Mammary epithelial cell (primary cell): ENCODE measurements at regions of chr22 and their contacts with region 1.

Region 1: DNA sequence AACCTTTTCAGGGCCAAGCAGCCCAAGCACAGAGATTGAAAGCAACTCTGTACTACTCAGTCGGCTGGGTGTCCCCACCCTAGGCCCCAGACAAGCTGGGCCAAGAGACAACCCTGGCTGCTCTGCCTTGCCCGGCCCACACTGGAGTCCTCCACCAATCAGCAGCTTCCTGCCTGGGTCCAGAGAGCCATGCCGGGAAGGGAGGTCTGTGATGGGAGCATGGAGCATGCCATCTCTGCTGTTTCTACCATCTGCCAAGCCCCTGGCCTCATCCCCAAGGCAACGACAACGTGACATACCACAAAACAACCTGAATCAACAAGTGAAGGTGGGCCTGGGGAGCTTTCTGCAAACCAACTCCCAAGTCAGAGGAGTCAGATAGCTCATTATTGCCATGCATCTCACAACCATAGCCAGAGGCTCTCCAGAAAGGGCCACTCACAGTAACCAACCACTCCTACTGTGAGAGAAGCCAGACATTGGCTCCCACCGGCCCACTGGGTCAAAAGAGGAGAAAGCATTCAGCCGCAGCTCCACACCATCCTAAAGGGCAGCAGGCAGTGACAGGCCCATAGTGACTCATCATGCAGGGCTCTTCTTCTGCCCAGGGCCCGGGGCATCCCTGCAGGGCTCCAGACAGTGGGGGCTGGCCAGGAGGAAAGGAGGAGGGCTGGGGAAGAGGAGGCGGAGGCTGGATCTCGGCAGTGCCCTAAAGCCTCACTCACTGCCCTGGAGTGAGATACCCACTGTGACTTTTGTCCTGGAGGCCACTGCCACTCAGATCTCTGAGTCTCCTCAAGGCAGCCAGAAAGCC is 18.1 kb downstream of the PATZ1 start:
- DNase-seq: peak; percentile 61
- H3K4me3 ChIP-seq: no peak overlapping the region
- H3K27ac ChIP-seq: no peak overlapping the region
- H3K4me1 ChIP-seq: peaks cover 30% of the 10 kb centered on the region
- H3K27me3 ChIP-seq: no peaks in the 10 kb centered on the region
- CTCF ChIP-seq: no peak

Region 2: DNA sequence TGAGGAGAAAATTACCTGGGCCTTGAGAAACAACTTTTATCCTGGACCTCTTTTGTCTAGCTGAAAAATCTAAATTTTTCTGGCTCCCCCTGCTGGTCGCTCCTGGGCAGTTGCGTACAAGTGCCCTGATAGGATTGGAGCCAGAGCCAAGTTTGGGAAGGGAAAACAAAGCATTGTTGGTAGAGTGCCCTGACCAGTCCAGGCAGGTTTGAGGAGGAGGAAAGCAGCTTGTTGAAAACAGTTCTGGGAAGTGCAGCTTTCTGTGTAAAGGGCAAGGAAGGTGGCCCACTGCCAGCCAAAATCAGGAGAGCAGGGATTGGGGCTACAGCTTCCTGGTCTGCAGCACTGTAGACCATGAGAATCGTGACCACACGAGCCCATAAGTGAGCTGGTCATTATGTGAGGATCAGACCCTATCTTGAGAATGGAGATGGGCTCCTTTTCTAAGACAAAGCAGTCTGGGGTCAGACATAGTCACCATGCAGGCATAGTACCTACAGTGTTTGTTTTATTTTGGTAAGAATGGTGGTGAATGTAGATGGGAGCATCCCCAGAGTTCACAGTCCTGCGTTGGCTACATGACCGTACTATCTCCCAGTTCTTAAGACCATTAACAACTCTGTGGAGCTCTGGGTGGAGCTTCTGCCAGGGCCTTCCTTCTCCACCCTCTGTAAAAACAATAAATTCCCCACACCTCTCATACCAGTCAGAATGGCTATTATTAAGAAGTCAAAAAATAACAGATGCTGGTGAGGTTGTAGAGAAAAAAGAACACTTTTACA is 14.5 kb before region 1 on chr22:
- CTCF ChIA-PET with region 1: no interaction called
- dilution Hi-C with region 1: no loop called
- in situ Hi-C with region 1: no loop called
- intact Hi-C with region 1: loop called (anchors 2 kb)
- DNase-seq: peak; percentile 87
- H3K4me3 ChIP-seq: no peak overlapping the region
- H3K27ac ChIP-seq: peak overlapping the region; percentile 52
- H3K4me1 ChIP-seq: peaks cover 6% of the 10 kb centered on the region
- H3K27me3 ChIP-seq: no peaks in the 10 kb centered on the region
- CTCF ChIP-seq: peak; percentile 88 to 95

Region 3: GRCh38 chr22:31361743-31362142 is 33.7 kb after region 1 on chr22:
- CTCF ChIA-PET with region 1: no interaction called
- dilution Hi-C with region 1: no loop called
- in situ Hi-C with region 1: no loop called
- intact Hi-C with region 1: no loop called
- DNase-seq: no peak
- H3K4me3 ChIP-seq: no peak overlapping the region
- H3K27ac ChIP-seq: no peak overlapping the region
- H3K4me1 ChIP-seq: no peaks in the 10 kb centered on the region
- H3K27me3 ChIP-seq: no peaks in the 10 kb centered on the region
- CTCF ChIP-seq: no peak